ENCODE measurements at regions of chr1 and their contacts with region 1.

Region 1: DNA sequence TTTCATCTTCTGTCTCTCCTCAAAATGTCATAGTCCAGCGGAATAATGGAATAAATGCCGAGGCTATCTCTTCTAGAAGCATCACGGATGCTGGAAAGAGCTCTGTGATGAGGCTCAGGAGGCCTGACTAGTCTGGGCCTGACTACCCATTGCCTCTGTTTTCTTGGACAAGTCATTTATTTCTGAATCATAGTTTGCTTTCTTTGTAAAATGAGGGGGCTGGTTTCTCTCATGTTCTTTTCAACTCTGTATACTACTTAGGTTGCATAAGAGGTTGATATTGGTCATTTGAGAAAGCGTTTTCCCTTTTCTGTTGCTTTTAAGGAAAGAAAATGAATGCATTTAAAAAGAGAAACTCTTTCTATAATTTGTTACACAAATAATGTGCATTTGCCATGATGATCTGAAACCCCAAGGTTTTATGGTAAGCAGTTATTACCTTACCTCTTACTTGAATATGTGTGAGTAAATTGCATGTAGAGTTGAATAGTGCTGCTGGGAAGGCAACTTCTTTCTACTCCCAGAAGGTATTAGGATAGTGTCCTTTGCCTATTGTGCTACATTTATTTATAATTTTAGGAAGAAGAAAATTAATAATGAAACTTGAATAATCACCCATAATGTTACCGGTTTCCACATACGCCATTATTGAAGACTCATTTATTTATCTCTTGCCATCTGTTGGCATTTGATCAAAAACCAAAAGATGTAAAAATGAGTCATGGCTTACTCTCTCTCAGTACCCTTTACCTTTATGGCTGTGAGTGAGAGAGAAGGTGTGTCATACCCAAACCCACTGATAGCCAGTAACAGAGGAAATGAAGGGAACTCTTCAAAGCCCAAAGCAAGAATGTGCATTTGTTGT is 179.1 kb downstream of the FASLG start:
- DNase-seq: peak in 3 of 9 experiments; percentile 28 to 83 (median 73)
- ATAC-seq: peak; percentile 98
- H3K4me3 ChIP-seq: no peak overlapping the region
- H3K4me3 Mint-ChIP-seq: no peak overlapping the region
- H3K27ac ChIP-seq: no peak overlapping the region
- H3K27ac Mint-ChIP-seq: no peak overlapping the region
- H3K4me1 ChIP-seq: peaks cover 13% of the 10 kb centered on the region
- H3K4me1 Mint-ChIP-seq: peaks cover 19% of the 10 kb centered on the region
- H3K27me3 ChIP-seq: no peaks in the 10 kb centered on the region
- H3K27me3 Mint-ChIP-seq: no peaks in the 10 kb centered on the region
- CTCF ChIP-seq: no peak

Region 2: DNA sequence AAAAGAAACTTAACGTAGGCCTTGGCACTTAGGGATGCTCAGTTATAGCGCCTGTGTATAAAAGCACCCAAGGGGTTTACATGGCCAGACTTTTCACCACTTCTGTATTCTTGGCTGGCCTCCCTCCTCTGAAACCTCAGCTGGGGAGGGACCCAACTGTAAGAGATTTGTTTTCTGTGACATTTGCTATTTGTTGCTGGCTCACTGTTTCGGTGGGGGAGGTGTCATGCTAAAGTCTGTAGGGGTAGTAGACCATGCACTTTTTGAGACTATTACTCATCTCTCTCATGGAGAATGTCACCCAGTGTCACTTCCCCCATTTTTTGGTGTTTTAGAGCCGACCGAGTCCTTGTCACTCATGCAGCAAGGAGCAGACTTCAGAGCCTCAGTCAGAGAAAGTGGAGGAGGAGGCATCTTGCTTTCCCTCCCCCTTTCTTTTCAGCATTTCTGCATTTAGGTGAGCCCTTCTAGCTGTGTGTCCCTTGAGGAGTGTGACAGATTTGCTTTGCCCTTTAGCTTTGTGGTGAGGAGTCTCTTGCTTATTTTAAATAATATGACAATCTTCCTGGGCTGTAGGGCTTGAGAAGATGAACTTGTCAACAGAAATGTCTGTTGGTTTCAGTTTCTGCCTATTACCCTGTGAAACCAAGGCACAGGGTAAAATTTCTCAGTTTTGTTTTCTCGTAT is 19.1 kb before region 1 on chr1:
- CTCF ChIA-PET with region 1: no interaction called
- POLR2A ChIA-PET with region 1: no interaction called
- intact Hi-C with region 1: loop called in 1 of 2 experiments (anchors 2 kb)
- DNase-seq: peak in 5 of 9 experiments; percentile 8 to 52 (median 36)
- ATAC-seq: peak; percentile 80
- H3K4me3 ChIP-seq: peak overlapping the region in 1 of 2 experiments; percentile 14
- H3K4me3 Mint-ChIP-seq: peak overlapping the region; percentile 74
- H3K27ac ChIP-seq: peak overlapping the region; percentile 8 to 74
- H3K27ac Mint-ChIP-seq: peak overlapping the region; percentile 87
- H3K4me1 ChIP-seq: peaks cover 16% of the 10 kb centered on the region
- H3K4me1 Mint-ChIP-seq: peaks cover 31% of the 10 kb centered on the region
- H3K27me3 ChIP-seq: no peaks in the 10 kb centered on the region
- H3K27me3 Mint-ChIP-seq: no peaks in the 10 kb centered on the region
- CTCF ChIP-seq: no peak

Region 3: DNA sequence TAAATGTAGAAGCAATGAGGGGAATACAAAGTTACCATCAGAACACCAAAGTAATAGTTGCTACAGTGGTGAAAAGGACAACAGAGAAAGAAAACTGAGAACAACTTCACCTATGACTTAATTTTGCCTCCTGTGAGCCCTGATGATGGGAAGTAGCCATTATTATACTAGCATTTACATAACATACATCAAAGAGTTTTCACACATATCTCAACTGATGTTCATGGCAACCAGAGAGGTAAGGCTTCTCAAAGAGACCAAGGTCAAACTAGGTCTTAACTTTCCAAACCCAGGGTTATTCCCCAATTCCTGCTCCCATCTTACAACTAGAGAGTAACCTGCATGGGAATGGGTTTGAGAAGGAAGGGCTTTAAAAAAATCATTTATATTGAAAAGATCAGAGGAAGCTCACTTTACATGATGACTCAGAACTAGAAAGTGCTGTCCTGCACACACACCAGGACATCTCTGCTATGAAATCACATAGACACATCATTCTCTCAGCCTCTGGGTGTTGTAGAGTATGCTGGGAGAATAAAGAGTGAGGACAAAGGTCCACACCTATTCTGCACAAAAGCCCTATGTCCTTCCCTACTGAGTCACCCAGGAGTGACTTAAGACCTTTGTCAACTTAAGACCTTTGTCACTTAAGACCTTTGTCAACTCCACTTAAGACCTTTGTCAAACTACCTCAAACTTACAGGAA is 33.0 kb after region 1 on chr1:
- CTCF ChIA-PET with region 1: no interaction called
- POLR2A ChIA-PET with region 1: no interaction called
- intact Hi-C with region 1: loop called in 1 of 2 experiments (anchors 2 kb)
- DNase-seq: no peak
- ATAC-seq: no peak
- H3K4me3 ChIP-seq: no peak overlapping the region
- H3K4me3 Mint-ChIP-seq: no peak overlapping the region
- H3K27ac ChIP-seq: no peak overlapping the region
- H3K27ac Mint-ChIP-seq: no peak overlapping the region
- H3K4me1 ChIP-seq: no peaks in the 10 kb centered on the region
- H3K4me1 Mint-ChIP-seq: peaks cover 23% of the 10 kb centered on the region
- H3K27me3 ChIP-seq: no peaks in the 10 kb centered on the region
- H3K27me3 Mint-ChIP-seq: no peaks in the 10 kb centered on the region
- CTCF ChIP-seq: no peak

Region 4: DNA sequence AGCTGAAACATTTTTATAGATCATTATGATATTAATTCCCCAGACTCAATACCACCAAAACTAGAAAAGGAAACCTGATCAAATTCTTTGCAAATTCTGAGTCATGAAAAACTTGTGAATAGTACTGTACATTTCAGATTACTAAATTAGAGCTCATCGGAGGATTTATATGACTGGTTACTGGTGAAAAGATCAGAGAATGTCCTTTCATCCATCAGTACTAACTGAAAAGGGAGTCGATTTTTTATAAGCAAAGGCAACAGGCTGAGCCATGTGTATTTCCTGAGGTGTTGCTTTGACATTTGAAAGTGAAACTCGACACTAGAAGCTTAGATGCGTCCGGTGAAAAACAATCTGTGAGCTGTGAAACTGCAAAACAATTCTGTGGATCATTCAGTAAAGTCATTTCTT is 57.0 kb after region 1 on chr1:
- CTCF ChIA-PET with region 1: no interaction called
- POLR2A ChIA-PET with region 1: no interaction called
- intact Hi-C with region 1: loop called in 1 of 2 experiments (anchors 5 kb)
- DNase-seq: peak in 6 of 9 experiments; percentile 9 to 70 (median 25)
- ATAC-seq: peak; percentile 83
- H3K4me3 ChIP-seq: peak overlapping the region; percentile 12 to 14
- H3K4me3 Mint-ChIP-seq: peak overlapping the region; percentile 78
- H3K27ac ChIP-seq: peak overlapping the region; percentile 17 to 64
- H3K27ac Mint-ChIP-seq: peak overlapping the region; percentile 92
- H3K4me1 ChIP-seq: peaks cover 24% of the 10 kb centered on the region
- H3K4me1 Mint-ChIP-seq: peaks cover 40% of the 10 kb centered on the region
- H3K27me3 ChIP-seq: no peaks in the 10 kb centered on the region
- H3K27me3 Mint-ChIP-seq: no peaks in the 10 kb centered on the region
- CTCF ChIP-seq: no peak